ENCODE measurements at regions of chr5 and their contacts with region 1.

Region 1: DNA sequence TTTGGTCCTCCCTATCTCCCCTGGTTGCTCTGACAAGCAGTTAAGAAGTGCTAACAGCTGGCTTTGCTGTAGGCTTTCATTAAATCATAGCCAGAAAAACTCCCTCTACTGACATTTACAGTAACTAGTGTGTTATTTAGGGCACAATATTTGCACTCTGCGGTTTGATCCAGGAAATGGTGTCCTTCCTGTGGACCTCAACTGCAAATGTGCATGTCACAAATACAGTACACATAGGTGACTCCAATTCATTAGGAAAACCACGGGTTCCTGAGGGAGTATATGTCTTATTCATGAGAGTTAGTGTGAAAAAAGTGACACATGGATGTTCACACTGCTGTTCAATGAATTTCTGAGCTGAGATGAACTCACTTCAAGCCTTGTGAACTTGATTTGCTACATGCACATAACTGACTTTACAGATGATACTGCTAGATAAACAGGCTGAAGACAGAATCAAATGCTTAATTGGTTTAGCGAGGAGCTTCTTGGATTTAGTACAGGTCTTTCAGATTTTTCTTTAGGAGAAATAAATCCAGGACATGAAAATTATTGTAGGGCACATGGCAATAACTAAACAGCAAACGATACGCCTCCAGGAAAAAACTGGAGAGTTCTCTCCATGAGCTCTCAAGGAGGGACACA is 281.5 kb downstream of the EFNA5 start:
- DNase-seq: peak; percentile 21
- H3K4me3 Mint-ChIP-seq: no peak overlapping the region
- H3K27ac Mint-ChIP-seq: peak overlapping the region; percentile 47
- H3K4me1 Mint-ChIP-seq: peaks cover 27% of the 10 kb centered on the region
- H3K27me3 Mint-ChIP-seq: no peaks in the 10 kb centered on the region

Region 2: GRCh38 chr5:107289030-107289714 is 100.1 kb before region 1 on chr5:
- CTCF ChIA-PET with region 1: no interaction called
- POLR2A ChIA-PET with region 1: no interaction called
- intact Hi-C with region 1: loop called (anchors 1 kb)
- DNase-seq: no peak
- H3K4me3 Mint-ChIP-seq: no peak overlapping the region
- H3K27ac Mint-ChIP-seq: no peak overlapping the region
- H3K4me1 Mint-ChIP-seq: peaks cover 11% of the 10 kb centered on the region
- H3K27me3 Mint-ChIP-seq: peaks cover 10% of the 10 kb centered on the region

Region 3: DNA sequence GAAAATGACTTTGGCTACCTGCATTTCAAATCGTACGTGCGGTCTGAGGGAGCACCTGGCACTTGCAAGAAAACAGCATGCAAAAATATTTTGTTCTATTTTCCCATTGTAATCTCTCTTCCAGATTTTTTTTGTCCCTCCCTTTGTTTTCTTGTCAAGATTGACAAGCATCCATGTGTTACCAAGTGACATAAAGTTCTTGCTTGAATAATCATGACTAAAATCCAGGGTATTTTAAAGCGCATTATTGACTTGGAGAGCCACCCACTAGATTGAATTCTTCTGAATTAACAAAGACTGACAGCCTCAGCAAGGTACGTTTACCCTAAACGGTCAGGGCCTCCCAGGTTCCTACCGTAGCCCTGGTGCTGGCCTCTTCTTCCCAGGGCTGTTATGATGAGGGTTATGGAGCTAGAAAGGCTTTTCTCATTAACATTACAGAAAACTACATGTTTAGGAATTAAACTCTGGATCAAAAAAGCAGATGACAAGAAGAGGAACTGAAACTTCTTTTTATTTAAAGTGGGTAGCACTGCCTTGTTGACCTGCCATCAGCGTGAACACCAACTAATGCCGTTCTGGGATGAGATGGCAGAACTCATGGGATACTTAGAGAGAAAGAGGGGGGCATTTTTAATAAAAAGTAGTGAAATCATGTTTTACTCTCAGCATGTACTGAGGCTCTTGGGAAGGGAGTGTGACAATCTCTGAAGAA is 15.5 kb before region 1 on chr5:
- CTCF ChIA-PET with region 1: no interaction called
- POLR2A ChIA-PET with region 1: no interaction called
- intact Hi-C with region 1: loop called (anchors 2 kb)
- DNase-seq: no peak
- H3K4me3 Mint-ChIP-seq: no peak overlapping the region
- H3K27ac Mint-ChIP-seq: no peak overlapping the region
- H3K4me1 Mint-ChIP-seq: no peaks in the 10 kb centered on the region
- H3K27me3 Mint-ChIP-seq: no peaks in the 10 kb centered on the region

Region 4: DNA sequence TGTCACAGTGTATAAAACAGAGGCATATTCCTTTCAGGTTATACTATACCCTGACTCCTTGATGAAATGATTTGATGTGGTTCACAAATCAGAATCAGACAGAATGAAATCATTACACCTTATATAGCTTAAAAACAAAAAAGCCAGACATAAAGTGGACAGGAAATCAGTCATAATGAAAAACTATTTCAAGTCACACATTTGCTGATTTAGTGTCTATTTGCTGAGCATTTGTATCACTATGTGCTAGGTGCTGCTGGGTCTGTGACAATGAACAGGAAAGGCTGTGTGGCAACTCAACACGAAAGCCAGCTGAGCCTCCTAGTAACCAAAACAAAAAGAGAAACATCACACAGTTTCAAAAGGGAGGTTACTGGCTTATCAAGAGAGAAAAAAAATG is 87.5 kb after region 1 on chr5:
- CTCF ChIA-PET with region 1: no interaction called
- POLR2A ChIA-PET with region 1: no interaction called
- intact Hi-C with region 1: loop called (anchors 2 kb)
- DNase-seq: peak; percentile 45
- H3K4me3 Mint-ChIP-seq: no peak overlapping the region
- H3K27ac Mint-ChIP-seq: no peak overlapping the region
- H3K4me1 Mint-ChIP-seq: peaks cover 2% of the 10 kb centered on the region
- H3K27me3 Mint-ChIP-seq: peaks cover 9% of the 10 kb centered on the region

Region 5: GRCh38 chr5:107486489-107486888 is 97.2 kb after region 1 on chr5:
- CTCF ChIA-PET with region 1: no interaction called
- POLR2A ChIA-PET with region 1: no interaction called
- intact Hi-C with region 1: loop called (anchors 2 kb)
- DNase-seq: peak; percentile 71
- H3K4me3 Mint-ChIP-seq: no peak overlapping the region
- H3K27ac Mint-ChIP-seq: no peak overlapping the region
- H3K4me1 Mint-ChIP-seq: peaks cover 16% of the 10 kb centered on the region
- H3K27me3 Mint-ChIP-seq: peaks cover 3% of the 10 kb centered on the region

Region 6: GRCh38 chr5:107571621-107572536 is 182.6 kb after region 1 on chr5:
- CTCF ChIA-PET with region 1: interaction called, 3 read pairs
- POLR2A ChIA-PET with region 1: no interaction called
- intact Hi-C with region 1: loop called (anchors 2 kb)
- DNase-seq: peak; percentile 91
- H3K4me3 Mint-ChIP-seq: peak overlapping the region; percentile 71
- H3K27ac Mint-ChIP-seq: no peak overlapping the region
- H3K4me1 Mint-ChIP-seq: peaks cover 16% of the 10 kb centered on the region
- H3K27me3 Mint-ChIP-seq: peaks cover 17% of the 10 kb centered on the region

Region 7: GRCh38 chr5:107673368-107674136 is 284.3 kb after region 1 on chr5:
- CTCF ChIA-PET with region 1: no interaction called
- POLR2A ChIA-PET with region 1: no interaction called
- intact Hi-C with region 1: loop called (anchors 5 kb)
- DNase-seq: peak; percentile 86
- H3K4me3 Mint-ChIP-seq: peak overlapping the region; percentile 59
- H3K27ac Mint-ChIP-seq: no peak overlapping the region
- H3K4me1 Mint-ChIP-seq: peaks cover 29% of the 10 kb centered on the region
- H3K27me3 Mint-ChIP-seq: peaks cover 52% of the 10 kb centered on the region